ENCODE measurements at regions of chr1 and their contacts with region 1.

Region 1: GRCh38 chr1:7810395-7810794 is 26.3 kb downstream of the PER3 start:
- DNase-seq: peak; percentile 63
- H3K4me3 Mint-ChIP-seq: no peak overlapping the region
- H3K27ac Mint-ChIP-seq: no peak overlapping the region
- H3K4me1 Mint-ChIP-seq: no peaks in the 10 kb centered on the region
- H3K27me3 Mint-ChIP-seq: no peaks in the 10 kb centered on the region

Region 2: GRCh38 chr1:7424352-7424890 is 386.0 kb before region 1 on chr1:
- CTCF ChIA-PET with region 1: no interaction called
- POLR2A ChIA-PET with region 1: no interaction called
- intact Hi-C with region 1: no loop called
- DNase-seq: no peak
- H3K4me3 Mint-ChIP-seq: no peak overlapping the region
- H3K27ac Mint-ChIP-seq: no peak overlapping the region
- H3K4me1 Mint-ChIP-seq: no peaks in the 10 kb centered on the region
- H3K27me3 Mint-ChIP-seq: peaks cover 4% of the 10 kb centered on the region

Region 3: GRCh38 chr1:7646981-7647901 is 163.2 kb before region 1 on chr1:
- CTCF ChIA-PET with region 1: no interaction called
- POLR2A ChIA-PET with region 1: no interaction called
- intact Hi-C with region 1: no loop called
- DNase-seq: peak; percentile 76
- H3K4me3 Mint-ChIP-seq: no peak overlapping the region
- H3K27ac Mint-ChIP-seq: no peak overlapping the region
- H3K4me1 Mint-ChIP-seq: no peaks in the 10 kb centered on the region
- H3K27me3 Mint-ChIP-seq: peaks cover 1% of the 10 kb centered on the region

Region 4: GRCh38 chr1:7869136-7869905 is 58.9 kb after region 1 on chr1:
- CTCF ChIA-PET with region 1: no interaction called
- POLR2A ChIA-PET with region 1: no interaction called
- intact Hi-C with region 1: no loop called
- DNase-seq: no peak
- H3K4me3 Mint-ChIP-seq: no peak overlapping the region
- H3K27ac Mint-ChIP-seq: no peak overlapping the region
- H3K4me1 Mint-ChIP-seq: no peaks in the 10 kb centered on the region
- H3K27me3 Mint-ChIP-seq: no peaks in the 10 kb centered on the region

Region 5: GRCh38 chr1:7902478-7903085 is 92.2 kb after region 1 on chr1:
- CTCF ChIA-PET with region 1: interaction called, 7 read pairs
- POLR2A ChIA-PET with region 1: no interaction called
- intact Hi-C with region 1: loop called (anchors 5 kb)
- DNase-seq: peak; percentile 72
- H3K4me3 Mint-ChIP-seq: peak overlapping the region; percentile 37
- H3K27ac Mint-ChIP-seq: no peak overlapping the region
- H3K4me1 Mint-ChIP-seq: peaks cover 10% of the 10 kb centered on the region
- H3K27me3 Mint-ChIP-seq: no peaks in the 10 kb centered on the region

Region 6: GRCh38 chr1:7975212-7975865 is 164.9 kb after region 1 on chr1:
- CTCF ChIA-PET with region 1: no interaction called
- POLR2A ChIA-PET with region 1: no interaction called
- intact Hi-C with region 1: no loop called
- DNase-seq: peak; percentile 58
- H3K4me3 Mint-ChIP-seq: no peak overlapping the region
- H3K27ac Mint-ChIP-seq: no peak overlapping the region
- H3K4me1 Mint-ChIP-seq: peaks cover 2% of the 10 kb centered on the region
- H3K27me3 Mint-ChIP-seq: no peaks in the 10 kb centered on the region

Measured in activated CD4-positive, alpha-beta memory T cell treated with anti-CD3 and anti-CD28 coated beads for 36 hours (primary cell).